ENCODE measurements at regions of chr17 and their contacts with region 1.

Region 1: GRCh38 chr17:65137021-65137991 is at the start of gene RGS9:
- DNase-seq: peak; percentile 84
- ATAC-seq: peak; percentile 98
- H3K4me3 ChIP-seq: peak within 1 kb of the TSS; percentile 40 to 51
- H3K27ac ChIP-seq: no peak within 1 kb of the TSS
- H3K4me1 ChIP-seq: peaks cover 4 to 13% of the 10 kb centered on the region in 2 experiments; a peak in 3 of 4 replicates
- H3K27me3 ChIP-seq: peaks cover 19% of the 10 kb centered on the region; the same call in 1 of the 2 replicates
- CTCF ChIP-seq: peak; percentile 90 to 100 (median 97)
- POLR2A ChIP-seq: no peak
- RAD21 ChIP-seq: peak; percentile 83
- total RNA-seq, gene RGS9: 8.6 TPM

Region 2: DNA sequence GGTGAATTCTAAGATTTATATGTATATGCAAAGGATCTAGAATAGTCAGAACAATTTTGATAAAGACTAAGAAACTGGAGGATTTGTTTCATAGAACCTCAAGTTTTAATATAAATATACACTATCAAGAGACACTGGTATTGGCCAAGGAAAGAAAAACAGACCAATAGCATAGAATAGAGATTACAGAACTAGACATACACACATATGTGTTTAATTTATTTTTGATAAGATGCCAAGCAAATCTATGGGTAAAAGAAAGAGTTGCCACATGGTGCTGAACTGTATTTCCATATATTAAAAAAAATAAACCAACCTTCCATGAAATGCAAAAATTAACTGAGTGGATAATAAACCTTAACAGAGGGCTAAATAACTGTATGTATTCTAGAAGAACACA is 190.2 kb before region 1 on chr17:
- CTCF ChIA-PET with region 1: no interaction called
- POLR2A ChIA-PET with region 1: no interaction called
- RAD21 ChIA-PET with region 1: no interaction called
- intact Hi-C with region 1: no loop called
- DNase-seq: no peak
- ATAC-seq: no peak
- H3K4me3 ChIP-seq: no peak overlapping the region
- H3K27ac ChIP-seq: no peak overlapping the region
- H3K4me1 ChIP-seq: no peaks in the 10 kb centered on the region
- H3K27me3 ChIP-seq: no peaks in the 10 kb centered on the region
- CTCF ChIP-seq: no peak
- POLR2A ChIP-seq: no peak
- RAD21 ChIP-seq: no peak

Region 3: DNA sequence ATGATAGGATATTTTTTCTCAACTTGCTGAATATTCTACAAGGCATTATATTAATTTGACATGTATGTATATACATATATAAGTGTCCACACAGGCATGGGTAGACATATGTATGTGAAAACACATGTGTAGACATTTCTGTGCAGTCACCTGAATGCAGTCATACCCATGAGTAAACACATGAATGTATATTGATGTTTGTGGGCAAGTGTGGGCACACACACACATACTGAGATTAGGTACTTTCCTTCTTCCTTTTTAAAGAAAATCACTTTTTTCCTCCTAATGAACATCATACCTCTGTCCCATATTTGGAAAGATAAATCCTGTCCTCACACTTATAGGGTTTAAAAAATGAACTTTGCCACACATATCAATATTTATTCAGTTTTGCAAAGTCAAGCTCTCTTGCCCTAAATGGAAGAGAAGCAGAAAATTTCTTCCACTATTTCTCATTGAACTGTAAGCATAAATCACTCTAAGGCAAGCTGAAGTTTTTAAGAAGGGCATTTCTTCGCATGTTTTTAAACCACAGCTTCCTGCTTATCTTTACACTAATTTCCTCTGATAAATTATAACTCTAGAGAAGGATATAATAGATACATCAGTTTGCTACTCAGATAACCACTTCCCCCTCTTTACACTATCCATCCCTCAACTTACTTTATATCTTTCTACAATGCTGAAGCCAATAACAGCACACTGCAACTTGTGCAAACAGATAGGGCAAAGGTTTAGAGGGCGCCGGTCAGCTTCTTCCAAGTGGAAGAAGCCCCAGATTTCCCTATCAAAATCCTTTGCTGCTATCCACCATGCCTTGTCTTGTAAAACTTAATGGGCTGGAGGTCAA is 168.4 kb before region 1 on chr17:
- CTCF ChIA-PET with region 1: interaction called, 4 read pairs
- POLR2A ChIA-PET with region 1: no interaction called
- RAD21 ChIA-PET with region 1: no interaction called
- intact Hi-C with region 1: loop called (anchors 10 kb)
- DNase-seq: no peak
- ATAC-seq: no peak
- H3K4me3 ChIP-seq: no peak overlapping the region
- H3K27ac ChIP-seq: no peak overlapping the region
- H3K4me1 ChIP-seq: peaks cover 15 to 32% of the 10 kb centered on the region in 2 experiments
- H3K27me3 ChIP-seq: no peaks in the 10 kb centered on the region
- CTCF ChIP-seq: no peak; a peak in 1 of 6 replicates
- POLR2A ChIP-seq: no peak
- RAD21 ChIP-seq: peak; percentile 28; the same call in 1 of the 2 replicates

Region 4: DNA sequence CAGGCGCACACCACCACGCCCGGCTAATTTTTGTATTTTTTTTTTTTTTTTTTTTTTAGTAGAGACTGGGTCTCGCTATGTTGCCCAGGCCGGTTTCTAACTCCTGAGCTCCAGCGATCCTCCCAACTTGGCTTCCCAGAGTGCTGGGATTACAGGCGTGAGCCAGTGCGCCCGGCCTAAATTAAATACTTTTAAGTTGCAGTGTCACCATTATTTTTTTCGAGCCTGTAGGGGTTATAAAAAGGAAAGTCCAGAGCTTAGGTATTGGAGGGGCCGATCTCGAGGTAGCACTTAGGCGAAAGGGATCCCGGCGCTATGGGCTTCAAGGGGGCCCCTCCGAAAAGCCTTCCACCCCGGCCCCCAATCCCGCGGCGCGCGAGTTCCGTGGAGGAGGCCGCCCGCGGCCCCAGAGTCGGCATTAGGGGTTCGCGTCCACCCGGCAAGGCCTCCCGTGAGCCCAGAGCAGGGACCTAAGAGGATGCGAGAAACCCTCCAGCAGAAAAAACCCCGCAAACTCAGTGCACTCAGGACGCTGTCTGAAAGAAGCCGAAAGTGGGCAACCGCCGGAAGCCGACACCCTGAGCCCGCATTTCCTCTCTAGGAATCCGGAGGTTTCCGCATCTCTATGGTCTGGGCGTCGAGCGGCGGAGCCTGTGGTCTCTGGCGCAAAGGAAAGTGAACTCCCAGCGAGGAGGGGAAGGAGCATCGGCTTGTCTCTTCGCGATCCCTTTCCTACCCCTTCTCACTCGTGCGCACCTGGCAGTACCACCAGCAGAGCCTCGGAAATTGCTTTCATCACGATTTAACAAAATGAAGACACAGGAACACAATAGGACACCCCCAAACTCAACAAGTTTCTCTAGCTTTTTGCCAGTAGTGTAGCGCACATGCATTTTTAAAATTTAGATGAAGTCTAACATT is 14.2 kb before region 1 on chr17:
- CTCF ChIA-PET with region 1: interaction called, 8 read pairs
- POLR2A ChIA-PET with region 1: interaction called, 14 read pairs
- RAD21 ChIA-PET with region 1: no interaction called
- intact Hi-C with region 1: no loop called
- DNase-seq: peak; percentile 91
- ATAC-seq: peak; percentile 92
- H3K4me3 ChIP-seq: peak overlapping the region; percentile 71 to 73
- H3K27ac ChIP-seq: peak overlapping the region; percentile 73
- H3K4me1 ChIP-seq: peaks cover 5 to 17% of the 10 kb centered on the region in 2 experiments; a peak in 3 of 4 replicates
- H3K27me3 ChIP-seq: no peaks in the 10 kb centered on the region
- CTCF ChIP-seq: no peak
- POLR2A ChIP-seq: peak; percentile 10
- RAD21 ChIP-seq: no peak

Region 5: DNA sequence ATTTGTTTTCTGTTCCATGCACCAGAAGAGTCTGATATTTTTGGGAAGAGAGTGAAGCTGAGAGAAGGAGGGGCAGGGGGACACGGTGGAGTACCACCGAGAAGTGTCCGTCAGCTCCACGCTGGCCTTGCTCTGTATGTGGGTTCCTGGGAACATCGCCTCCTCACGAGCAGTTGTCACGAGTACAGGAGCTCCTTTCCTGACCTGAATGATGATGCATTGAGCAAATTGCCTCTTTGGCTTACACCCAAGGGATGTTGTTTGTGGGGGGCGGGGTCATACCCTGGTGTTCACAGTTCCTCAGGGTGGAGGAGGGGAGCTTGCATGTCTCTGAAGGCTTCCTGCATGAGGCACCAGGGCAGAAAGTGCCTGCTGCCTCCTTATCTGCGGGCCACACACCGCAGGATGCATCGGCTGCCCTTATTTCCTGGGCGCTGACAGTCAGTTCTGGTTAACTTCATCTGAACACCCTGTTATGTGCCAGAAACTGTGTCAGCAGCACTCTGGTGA is 36.0 kb after region 1 on chr17:
- CTCF ChIA-PET with region 1: no interaction called
- POLR2A ChIA-PET with region 1: no interaction called
- RAD21 ChIA-PET with region 1: no interaction called
- intact Hi-C with region 1: no loop called
- DNase-seq: no peak
- ATAC-seq: peak; percentile 55
- H3K4me3 ChIP-seq: no peak overlapping the region
- H3K27ac ChIP-seq: no peak overlapping the region
- H3K4me1 ChIP-seq: peaks cover 0 to 8% of the 10 kb centered on the region in 2 experiments; a peak in 2 of 4 replicates
- H3K27me3 ChIP-seq: no peaks in the 10 kb centered on the region; the same call in 1 of the 2 replicates
- CTCF ChIP-seq: no peak
- POLR2A ChIP-seq: no peak
- RAD21 ChIP-seq: no peak

Measured in HCT116 (cell line).